IMR-90 (cell line): ENCODE measurements at regions of chr3 and their contacts with region 1.

Region 1: DNA sequence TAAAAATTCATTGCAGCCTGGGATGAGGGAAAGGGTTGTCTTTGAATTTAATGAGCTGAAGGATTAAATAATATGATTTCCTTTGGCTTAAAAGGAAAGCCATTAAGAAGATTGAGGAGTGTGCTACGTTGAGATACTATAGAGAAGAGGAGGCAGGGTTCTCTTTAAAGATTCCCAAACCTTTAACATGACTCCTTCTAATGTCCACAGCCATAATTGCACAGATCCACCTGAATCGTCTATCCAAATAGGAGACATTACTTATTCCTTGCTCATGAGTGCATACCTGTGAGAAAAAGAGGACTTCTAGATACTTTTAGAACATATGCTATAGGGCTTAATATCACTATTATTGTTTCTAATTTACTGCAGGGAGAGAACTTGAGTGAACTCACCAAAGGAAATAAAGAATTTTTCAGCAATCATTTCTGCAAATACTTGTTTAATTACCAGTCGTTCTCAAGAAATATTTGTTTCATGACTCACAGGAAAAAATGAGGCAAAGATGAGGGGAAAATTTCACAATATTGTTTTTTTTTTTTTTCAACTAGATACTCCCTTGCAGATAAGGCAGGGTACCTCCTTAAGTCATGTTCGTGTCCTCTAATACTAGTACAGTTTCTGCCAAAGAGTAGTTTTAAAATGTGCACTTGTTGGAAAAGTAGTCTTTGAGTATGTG is 8.9 kb upstream of the SUCNR1 start:
- DNase-seq: peak; percentile 85
- ATAC-seq: peak; percentile 68
- H3K4me3 ChIP-seq: no peak overlapping the region
- H3K27ac ChIP-seq: peak overlapping the region; percentile 63
- H3K4me1 ChIP-seq: peaks cover 9% of the 10 kb centered on the region
- H3K27me3 ChIP-seq: no peaks in the 10 kb centered on the region
- CTCF ChIP-seq: no peak
- POLR2A ChIP-seq: no peak
- RAD21 ChIP-seq: no peak

Region 2: DNA sequence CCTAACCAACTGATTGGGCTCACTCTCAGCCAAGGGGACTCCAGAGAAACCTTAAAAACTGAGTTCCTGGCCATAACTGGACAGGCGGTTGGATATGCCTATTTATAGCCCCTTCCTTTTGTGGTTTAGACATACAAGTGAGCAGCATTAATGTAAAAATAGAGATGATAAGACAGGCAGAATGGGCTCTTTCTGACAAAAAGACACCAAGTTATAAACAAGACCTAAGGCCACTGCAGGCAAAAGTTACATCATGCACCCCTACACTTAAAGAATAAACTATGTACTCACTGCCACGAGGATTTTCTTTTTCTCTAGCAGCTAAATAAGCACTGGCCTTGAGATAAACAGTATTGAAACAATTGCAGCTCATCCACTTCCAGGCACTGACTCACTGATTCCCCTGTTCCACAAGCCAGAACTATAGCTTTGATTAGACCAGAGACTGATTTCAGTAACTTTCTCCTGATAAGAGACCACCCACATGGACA is 39.0 kb after region 1 on chr3:
- CTCF ChIA-PET with region 1: no interaction called
- POLR2A ChIA-PET with region 1: no interaction called
- dilution Hi-C with region 1: no loop called
- in situ Hi-C with region 1: no loop called
- intact Hi-C with region 1: loop called (anchors 5 kb)
- DNase-seq: peak; percentile 93
- ATAC-seq: peak; percentile 76
- H3K4me3 ChIP-seq: no peak overlapping the region
- H3K27ac ChIP-seq: peak overlapping the region; percentile 88
- H3K4me1 ChIP-seq: peaks cover 29% of the 10 kb centered on the region
- H3K27me3 ChIP-seq: no peaks in the 10 kb centered on the region
- CTCF ChIP-seq: no peak
- POLR2A ChIP-seq: no peak
- RAD21 ChIP-seq: no peak

Region 3: DNA sequence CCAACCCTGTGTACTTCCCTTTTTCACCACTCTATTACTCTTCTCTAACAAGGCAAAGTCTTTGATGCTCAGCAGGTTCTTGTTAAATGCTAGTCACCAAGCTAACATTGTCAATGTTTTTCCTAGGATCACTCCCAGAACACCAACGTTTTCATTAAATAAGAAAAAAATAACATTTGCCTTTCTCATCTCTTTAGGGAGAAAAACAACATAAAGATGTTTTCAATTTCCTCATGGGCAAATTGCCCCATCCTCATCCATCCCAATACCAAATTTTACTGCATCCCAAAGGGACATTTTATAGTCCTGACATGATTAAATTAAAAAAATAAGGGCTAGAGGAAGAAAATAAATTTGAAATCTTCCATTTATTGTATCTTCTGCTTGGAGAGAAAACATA is 115.3 kb after region 1 on chr3:
- CTCF ChIA-PET with region 1: no interaction called
- POLR2A ChIA-PET with region 1: no interaction called
- dilution Hi-C with region 1: no loop called
- in situ Hi-C with region 1: no loop called
- intact Hi-C with region 1: no loop called
- DNase-seq: no peak
- ATAC-seq: no peak
- H3K4me3 ChIP-seq: no peak overlapping the region
- H3K27ac ChIP-seq: no peak overlapping the region
- H3K4me1 ChIP-seq: peaks cover 2% of the 10 kb centered on the region; the same call in 1 of the 2 replicates
- H3K27me3 ChIP-seq: no peaks in the 10 kb centered on the region
- CTCF ChIP-seq: no peak
- POLR2A ChIP-seq: no peak
- RAD21 ChIP-seq: no peak